HEK293 (cell line): ENCODE measurements at regions of chr22 and their contacts with region 1.

Region 1: GRCh38 chr22:37019309-37020125 is at the starts of genes MPST and TST:
- H3K4me3 ChIP-seq: peak within 1 kb of the TSS; percentile 82
- H3K27ac ChIP-seq: peak within 1 kb of the TSS; percentile 97
- H3K4me1 ChIP-seq: no peaks in the 10 kb centered on the region
- CTCF ChIP-seq: peak; percentile 86

Region 2: DNA sequence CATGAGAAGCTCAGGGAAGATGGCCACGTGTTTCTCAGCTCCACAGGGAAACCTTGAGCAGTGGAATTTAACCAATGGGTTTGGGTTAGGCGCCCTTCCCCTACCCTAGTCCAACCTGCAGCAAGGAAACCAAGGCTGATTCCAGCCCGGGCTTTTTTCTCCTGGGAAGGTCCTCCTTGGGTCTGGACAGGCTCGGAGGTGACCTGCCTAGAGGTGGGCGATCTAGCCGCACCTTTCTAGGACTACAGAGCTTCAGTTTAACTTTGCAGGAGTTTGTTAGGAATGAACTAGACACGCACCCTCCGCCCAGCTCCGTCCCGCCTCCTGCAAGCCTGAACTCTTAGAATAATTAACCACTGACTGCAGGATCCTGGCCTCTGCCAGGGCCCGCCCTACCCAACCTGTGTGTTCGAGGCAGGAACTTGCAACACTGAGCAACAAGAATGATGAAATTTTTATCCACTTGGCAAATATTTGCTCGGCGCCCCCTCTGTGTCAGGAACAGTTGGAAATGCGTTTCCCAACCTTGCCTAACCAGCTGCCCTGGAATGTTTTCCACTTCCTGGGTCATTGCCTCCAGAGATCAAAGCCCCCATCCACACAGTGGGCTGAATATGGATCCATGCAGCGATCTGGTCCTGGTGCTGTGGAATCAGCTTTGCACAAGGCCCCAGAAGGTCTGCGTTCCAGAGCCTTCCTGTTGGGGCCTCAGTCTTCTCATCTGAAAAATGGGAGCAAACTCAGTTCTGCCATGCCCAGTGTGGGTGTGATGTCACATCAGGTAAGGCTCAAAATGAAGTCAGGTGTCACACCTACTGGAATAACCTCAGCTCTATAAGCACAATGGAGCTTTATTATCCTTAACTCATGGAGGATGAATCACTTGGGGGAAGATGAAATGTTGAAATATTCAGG is 13.3 kb after region 1 on chr22:
- CTCF ChIA-PET with region 1: interaction called, 39 read pairs
- POLR2A ChIA-PET with region 1: interaction called, 13 read pairs
- H3K4me3 ChIP-seq: no peak overlapping the region
- H3K27ac ChIP-seq: no peak overlapping the region
- H3K4me1 ChIP-seq: no peaks in the 10 kb centered on the region
- CTCF ChIP-seq: no peak

Region 3: DNA sequence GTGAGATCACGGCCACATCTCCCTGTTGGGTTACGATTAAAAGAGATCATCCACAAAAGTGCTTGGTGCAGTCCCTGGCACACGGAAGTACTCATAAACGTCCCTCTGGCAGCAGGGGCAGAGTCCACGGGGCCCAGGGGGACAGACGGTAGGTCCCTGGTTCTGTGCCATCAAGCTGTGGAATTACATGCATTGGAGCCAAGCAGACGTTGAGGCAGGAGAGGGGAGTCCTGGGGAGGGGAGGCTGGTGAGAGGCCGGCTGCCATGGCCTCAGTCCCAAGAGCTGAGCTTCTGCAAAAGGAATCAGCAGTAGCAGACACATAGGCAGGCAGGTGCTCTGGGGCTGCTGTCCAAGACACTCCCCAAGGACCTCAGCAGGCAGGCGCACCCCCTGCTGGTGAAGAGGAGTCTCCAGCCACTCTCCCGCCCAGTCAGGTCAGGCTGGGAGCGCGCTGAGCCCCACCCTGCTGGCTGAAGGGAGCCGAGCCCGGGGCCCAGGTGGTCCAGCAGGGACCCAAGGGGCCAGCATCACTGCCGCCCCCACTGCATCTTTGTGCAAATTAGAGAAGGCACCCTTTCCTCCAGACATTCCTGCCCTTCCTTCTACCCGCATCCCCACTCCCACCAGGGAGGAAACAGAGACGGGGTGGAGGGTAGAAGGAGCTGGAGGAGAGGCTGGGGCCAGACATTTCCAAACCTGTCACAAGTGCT is 24.5 kb after region 1 on chr22:
- CTCF ChIA-PET with region 1: interaction called, 16 read pairs
- POLR2A ChIA-PET with region 1: interaction called, 3 read pairs
- H3K4me3 ChIP-seq: no peak overlapping the region
- H3K27ac ChIP-seq: no peak overlapping the region
- H3K4me1 ChIP-seq: no peaks in the 10 kb centered on the region
- CTCF ChIP-seq: peak; percentile 70